Thyroid gland (tissue), 4 donors: ENCODE measurements at regions of chr3 and their contacts with region 1.

Region 1: GRCh38 chr3:196969660-196970546 is 1.3 kb upstream of the PIGZ start:
- DNase-seq: peak; percentile 39 to 41
- H3K4me3 ChIP-seq: peak overlapping the region in 2 of 3 donors; percentile 39 to 69
- H3K27ac ChIP-seq: peak overlapping the region in 2 of 3 donors; percentile 62 to 73
- H3K4me1 ChIP-seq: peaks cover 6 to 10% of the 10 kb centered on the region in 2 donors
- H3K27me3 ChIP-seq: no peaks in the 10 kb centered on the region
- CTCF ChIP-seq: peak in 4 of 6 experiments; percentile 73 to 97 (median 90)
- POLR2A ChIP-seq: no peak

Region 2: DNA sequence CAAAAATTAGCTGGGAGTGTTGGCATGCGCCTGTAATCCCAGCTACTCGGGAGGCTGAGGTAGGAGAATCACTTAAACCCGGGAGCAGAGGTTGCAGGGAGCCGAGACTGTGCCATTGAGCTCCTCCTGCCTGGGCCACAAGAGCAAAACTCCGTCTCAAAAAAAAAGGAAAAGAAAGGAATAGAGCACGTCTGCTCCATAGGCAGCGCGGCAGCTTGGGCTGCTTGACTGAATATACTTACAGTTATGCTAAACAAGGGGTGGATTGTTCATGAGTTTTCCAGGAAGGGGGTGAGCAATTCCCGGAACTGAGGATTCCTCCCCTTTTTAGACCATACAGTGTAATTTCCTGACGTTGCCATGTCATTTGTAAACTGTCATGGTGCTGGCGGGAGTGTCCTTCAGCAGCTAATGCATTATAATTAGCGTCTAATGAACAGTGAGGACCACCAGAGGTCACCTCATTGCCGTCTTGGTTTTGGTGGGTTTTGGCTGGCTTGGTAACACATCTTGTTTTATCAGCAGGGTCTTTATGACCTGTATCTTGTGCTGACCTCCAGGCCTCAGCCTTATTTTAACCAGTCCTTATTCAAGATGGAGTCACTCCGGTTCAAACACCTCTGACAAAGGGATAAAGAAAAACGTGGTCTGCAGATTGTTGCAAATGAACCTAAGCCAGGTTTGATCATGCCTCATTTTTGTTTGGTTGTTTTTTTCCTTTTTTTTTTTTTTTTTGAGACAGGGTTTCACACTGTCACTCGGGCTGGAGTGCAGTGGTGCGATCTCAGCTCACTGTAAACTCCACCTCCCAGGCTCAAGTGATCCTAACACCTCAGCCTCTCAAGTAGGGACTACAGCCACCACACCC is 127.1 kb before region 1 on chr3:
- intact Hi-C with region 1: loop called (anchors 10 kb)
- DNase-seq: no peak
- H3K4me3 ChIP-seq: no peak overlapping the region
- H3K27ac ChIP-seq: no peak overlapping the region
- H3K4me1 ChIP-seq: no peaks in the 10 kb centered on the region
- H3K27me3 ChIP-seq: no peaks in the 10 kb centered on the region
- CTCF ChIP-seq: no peak
- POLR2A ChIP-seq: no peak

Region 3: DNA sequence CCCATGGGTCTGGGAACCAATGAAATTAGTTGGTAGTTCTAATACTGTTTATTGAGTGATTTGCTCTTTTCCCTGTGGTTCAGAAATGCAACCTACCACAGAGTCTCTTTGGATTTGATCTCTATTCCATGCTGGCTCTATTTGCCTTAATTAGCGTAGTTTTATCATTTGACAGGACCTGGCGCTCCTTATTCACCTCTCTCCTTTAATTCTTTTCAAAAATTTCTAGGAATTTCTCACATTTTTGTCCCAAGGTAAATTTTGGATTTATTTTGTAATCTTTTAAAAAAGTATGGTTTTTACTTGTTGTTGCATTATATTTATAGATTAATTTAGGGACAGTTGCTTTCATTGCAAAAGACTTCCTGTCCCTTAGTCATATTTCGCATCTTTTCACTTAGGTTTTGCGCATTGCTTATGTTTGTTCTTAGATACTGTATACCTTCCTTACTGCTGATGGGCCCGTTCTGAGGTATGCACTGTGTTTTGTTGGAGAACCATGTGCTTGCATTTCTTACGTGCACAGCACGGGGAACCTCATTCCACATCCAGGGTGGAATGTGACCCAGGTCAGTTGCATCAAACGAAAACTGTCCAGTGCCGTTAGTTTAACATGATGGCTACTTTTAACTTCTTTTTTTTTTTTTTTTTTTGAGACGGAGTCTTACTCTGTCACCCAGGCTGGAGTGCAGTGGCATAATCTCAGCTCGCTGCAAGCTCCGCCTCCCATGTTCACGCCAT is 75.2 kb before region 1 on chr3:
- intact Hi-C with region 1: no loop called
- DNase-seq: no peak
- H3K4me3 ChIP-seq: no peak overlapping the region
- H3K27ac ChIP-seq: no peak overlapping the region
- H3K4me1 ChIP-seq: no peaks in the 10 kb centered on the region
- H3K27me3 ChIP-seq: no peaks in the 10 kb centered on the region
- CTCF ChIP-seq: no peak
- POLR2A ChIP-seq: no peak